ENCODE measurements at regions of chr9 and their contacts with region 1.

Region 1: GRCh38 chr9:128117613-128118471 is 9.7 kb downstream of the PTGES2 start:
- DNase-seq: peak; percentile 95 to 99 (median 98)
- ATAC-seq: peak; percentile 67
- H3K4me3 ChIP-seq: no peak overlapping the region
- H3K4me1 ChIP-seq: peaks cover 31% of the 10 kb centered on the region
- CTCF ChIP-seq: peak; percentile 100

Region 2: DNA sequence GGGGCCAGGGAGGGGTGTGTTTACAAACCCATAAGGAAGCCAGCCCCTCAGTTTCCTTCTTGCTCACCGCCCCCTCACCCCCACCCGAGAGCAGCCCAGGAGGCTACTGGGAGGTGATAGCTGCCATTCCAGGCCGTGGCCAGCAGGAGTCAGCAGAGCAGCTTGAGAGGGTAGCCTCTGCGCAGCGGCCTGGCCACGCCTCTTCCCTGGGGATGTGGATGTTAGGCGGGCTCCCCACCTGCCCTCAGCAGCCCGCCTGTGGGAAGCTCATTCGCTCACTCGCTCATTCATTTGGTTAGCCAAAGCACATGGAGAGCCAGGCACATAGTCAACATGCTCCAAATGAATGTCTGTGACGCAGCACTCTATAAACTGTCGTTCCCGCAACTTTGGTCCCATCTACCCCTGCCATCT is 174.1 kb before region 1 on chr9:
- intact Hi-C with region 1: loop called in 1 of 2 experiments (anchors 10 kb)
- DNase-seq: peak; percentile 89 to 91 (median 89)
- ATAC-seq: peak; percentile 85
- H3K4me3 ChIP-seq: no peak overlapping the region
- H3K4me1 ChIP-seq: peaks cover 3% of the 10 kb centered on the region
- CTCF ChIP-seq: peak; percentile 92

Region 3: DNA sequence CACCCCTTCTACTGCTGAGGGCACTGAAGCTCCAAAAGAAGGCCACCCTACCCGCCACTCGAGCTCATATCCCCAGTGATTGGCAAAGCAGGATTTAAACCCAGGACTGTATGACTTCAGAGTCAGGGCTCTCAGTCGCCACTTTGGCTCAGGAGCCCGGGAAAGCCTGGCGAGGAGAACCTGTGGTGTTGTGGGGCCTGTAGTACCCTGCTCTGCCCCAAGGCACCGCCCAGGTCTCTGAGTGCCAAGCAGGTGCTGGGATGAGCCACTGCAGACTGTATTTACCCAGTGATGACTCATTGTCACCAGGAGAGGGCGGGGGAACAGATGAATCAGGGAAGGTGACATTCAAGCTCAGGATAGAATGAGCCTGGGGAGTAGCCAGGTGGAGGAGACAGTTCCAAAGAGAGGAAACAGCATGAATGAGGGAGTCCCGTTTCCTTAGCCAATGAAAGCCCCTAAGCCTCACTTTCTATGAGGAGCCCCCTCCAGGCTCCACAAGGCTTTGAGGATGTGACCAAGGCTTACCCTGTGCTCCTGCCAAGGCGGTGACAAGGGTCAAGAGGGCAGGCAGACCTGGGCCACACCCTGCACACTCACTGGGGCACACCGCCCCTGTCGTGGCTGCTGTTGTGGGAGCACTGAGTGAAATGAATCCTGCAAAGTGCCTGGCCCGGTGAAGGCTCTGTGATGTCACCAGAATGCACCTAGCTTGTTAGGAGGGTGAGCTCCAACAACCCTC is 162.4 kb before region 1 on chr9:
- intact Hi-C with region 1: loop called in 1 of 2 experiments (anchors 10 kb)
- DNase-seq: peak; percentile 89 to 95 (median 93)
- ATAC-seq: peak; percentile 92
- H3K4me3 ChIP-seq: no peak overlapping the region
- H3K4me1 ChIP-seq: peaks cover 59% of the 10 kb centered on the region
- CTCF ChIP-seq: peak; percentile 76

Region 4: GRCh38 chr9:128034821-128035764 is 82.7 kb before region 1 on chr9:
- intact Hi-C with region 1: loop called in 1 of 2 experiments (anchors 10 kb)
- DNase-seq: peak; percentile 72 to 80 (median 79)
- ATAC-seq: peak; percentile 96
- H3K4me3 ChIP-seq: no peak overlapping the region
- H3K4me1 ChIP-seq: peaks cover 19% of the 10 kb centered on the region
- CTCF ChIP-seq: peak; percentile 76

Region 5: DNA sequence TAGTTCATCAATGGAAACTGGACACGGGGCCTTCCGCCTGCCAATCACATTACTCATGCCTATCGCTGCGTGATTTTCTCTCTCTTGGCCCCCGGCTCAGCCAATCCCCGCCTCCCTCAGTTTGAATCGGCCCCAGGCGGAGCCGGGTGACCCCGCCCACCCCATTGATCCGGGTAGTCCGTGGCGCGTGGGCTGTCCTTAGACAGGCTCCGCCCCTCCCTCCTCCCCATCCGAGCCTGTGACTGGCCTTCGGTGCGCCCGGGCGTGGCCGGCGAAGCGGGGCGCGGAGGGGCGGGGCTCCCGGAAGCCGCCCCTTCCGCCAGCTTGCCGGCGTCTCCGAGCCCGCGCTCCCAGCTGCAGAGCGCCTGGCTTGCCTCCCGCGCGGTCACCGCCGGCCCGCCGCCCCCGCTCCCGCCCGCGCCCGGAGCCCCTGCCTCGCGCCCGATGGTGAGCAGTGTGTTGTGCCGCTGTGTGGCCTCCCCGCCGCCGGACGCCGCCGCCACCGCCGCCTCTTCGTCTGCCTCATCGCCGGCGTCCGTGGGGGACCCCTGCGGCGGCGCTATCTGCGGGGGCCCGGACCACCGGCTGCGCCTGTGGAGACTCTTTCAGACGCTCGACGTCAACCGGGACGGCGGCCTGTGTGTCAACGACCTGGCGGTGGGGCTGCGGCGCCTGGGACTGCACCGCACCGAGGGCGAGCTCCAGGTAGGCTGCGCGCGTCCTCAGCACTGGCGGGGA is 49.8 kb before region 1 on chr9 and contains the start of gene SLC25A25:
- intact Hi-C with region 1: loop called in 1 of 2 experiments (anchors 10 kb)
- DNase-seq: peak; percentile 100
- ATAC-seq: peak; percentile 88
- H3K4me3 ChIP-seq: peak within 1 kb of the TSS; percentile 65
- H3K4me1 ChIP-seq: peaks cover 51% of the 10 kb centered on the region
- CTCF ChIP-seq: no peak
- total RNA-seq, gene SLC25A25: 19.1 to 27.3 (median 21.3) TPM

Measured in mucosa of descending colon (tissue), 3 donors.